A549 (cell line): ENCODE measurements at regions of chr14 and their contacts with region 1.

Region 1: DNA sequence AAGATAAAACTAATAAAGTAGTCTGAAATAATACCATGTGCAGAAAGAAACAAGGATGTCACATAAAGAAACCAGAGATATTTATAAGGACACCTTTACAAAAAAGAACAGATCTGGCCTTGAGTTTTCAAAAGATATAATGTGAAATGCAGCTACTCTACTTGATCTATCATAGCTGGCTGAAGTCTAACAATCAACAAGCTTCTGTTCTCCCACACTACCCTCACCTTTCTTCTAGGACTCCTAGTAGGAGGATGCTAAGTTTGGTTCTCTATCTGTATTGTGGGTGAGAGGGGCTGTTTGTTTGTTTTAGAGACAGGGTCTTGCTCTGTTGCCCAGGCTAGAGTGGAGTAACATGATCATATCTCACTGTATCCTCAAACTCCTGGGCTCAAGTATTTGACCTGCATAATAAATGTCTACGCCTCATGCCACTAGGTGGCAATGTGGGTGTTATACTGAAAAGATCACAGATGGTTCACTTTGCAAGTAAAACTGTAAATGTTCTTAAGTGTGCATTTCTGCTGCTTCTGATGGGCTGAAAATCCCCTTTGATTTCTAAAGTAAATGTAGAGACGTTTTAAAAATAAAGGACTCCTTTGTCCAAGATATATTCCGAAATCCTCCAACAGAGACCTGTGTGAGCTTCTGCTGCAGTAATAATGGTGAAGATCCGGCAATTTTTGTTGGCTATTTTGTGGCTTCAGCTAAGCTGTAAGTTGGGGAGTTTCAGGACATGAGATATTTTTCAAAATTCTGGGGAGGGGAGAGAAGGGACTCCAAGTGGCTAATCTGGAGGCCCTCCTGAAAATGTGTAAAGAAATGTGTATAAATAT is 269.3 kb downstream of the DAD1 start:
- DNase-seq: peak; percentile 29 to 73
- ATAC-seq: peak; percentile 92 to 97
- H3K4me3 ChIP-seq: no peak overlapping the region
- H3K27ac ChIP-seq: no peak overlapping the region
- H3K4me1 ChIP-seq: no peaks in the 10 kb centered on the region; the same call in 2 of the 3 replicates
- CTCF ChIP-seq: peak; percentile 79
- EP300 ChIP-seq: no peak
- POLR2A ChIP-seq: no peak
- RAD21 ChIP-seq: peak; percentile 74 to 79

Region 2: DNA sequence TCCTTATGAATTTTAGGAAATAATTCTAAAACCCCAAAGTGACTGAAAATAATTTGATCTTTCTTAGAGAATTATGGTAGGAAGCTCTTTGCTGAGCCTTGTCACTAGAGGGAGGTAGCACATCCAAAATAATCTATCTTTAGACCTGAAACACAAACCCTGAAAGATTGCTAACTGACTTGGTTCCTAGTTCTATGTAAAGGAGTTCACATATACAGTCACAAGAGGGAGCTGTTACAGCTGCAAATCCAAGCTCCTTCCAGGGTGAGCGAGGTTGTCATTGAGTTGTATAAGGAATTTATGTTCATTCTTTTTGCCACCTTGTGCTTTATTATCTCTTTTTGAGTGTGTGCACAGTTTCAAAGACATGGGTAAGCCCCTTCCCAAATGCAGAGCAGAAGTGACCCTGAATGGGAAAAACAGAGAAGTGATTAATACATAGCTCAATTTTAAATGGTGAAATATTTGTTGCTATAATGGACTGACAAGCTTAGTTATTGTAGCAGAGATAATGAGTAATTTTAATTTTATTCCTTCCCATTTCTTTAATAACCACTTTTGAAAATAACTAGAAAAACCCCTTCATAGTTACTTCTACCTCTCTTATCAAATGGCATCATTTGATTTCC is 118.7 kb before region 1 on chr14:
- CTCF ChIA-PET with region 1: interaction called, 11 read pairs
- POLR2A ChIA-PET with region 1: no interaction called
- DNase-seq: peak; percentile 16 to 71
- ATAC-seq: peak; percentile 76 to 95
- H3K4me3 ChIP-seq: no peak overlapping the region
- H3K27ac ChIP-seq: no peak overlapping the region
- H3K4me1 ChIP-seq: no peaks in the 10 kb centered on the region
- CTCF ChIP-seq: peak; percentile 59
- EP300 ChIP-seq: no peak
- POLR2A ChIP-seq: no peak
- RAD21 ChIP-seq: peak; percentile 18 to 50; a peak in 2 of 5 replicates

Region 3: GRCh38 chr14:22303589-22304195 is 16.1 kb before region 1 on chr14:
- CTCF ChIA-PET with region 1: interaction called, 25 read pairs
- POLR2A ChIA-PET with region 1: no interaction called
- DNase-seq: no peak
- ATAC-seq: 0 out of 6 replicates have a peak, but pooled peaks of 1 of the 2 experiments have one; percentile 47
- H3K4me3 ChIP-seq: no peak overlapping the region
- H3K27ac ChIP-seq: no peak overlapping the region
- H3K4me1 ChIP-seq: no peaks in the 10 kb centered on the region
- CTCF ChIP-seq: peak; percentile 60
- EP300 ChIP-seq: no peak
- POLR2A ChIP-seq: no peak
- RAD21 ChIP-seq: peak; percentile 45; a peak in 3 of 5 replicates

Region 4: DNA sequence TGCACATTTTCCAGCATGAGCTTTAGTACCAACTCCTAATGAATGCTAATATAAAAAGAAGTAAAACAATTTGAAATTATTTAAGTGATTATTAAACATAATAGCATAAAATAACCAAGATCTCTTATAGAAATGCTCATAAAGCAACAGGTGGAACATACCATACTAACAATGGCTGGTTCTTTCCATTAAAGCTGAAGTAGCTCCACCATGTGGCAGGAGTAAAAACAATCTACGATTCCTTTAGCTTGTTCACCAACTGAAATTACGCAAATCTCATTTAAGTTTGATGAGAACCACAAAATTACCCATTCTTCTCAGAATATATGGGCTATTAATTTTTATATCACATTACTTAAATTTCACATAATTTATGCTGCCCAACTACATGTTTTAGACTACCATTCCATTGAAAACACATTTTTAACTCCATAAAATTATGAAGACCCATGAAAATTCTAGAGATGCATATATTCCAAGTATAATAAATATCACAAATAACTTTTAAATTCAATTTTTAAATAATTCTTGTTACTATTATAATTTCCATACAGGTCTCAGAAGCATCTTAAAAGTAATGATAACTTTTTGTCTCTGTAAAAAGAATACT is 55.7 kb after region 1 on chr14:
- CTCF ChIA-PET with region 1: interaction called, 138 read pairs
- POLR2A ChIA-PET with region 1: no interaction called
- DNase-seq: peak; percentile 21 to 70
- ATAC-seq: peak in 1 of 2 experiments; percentile 74; a peak in 3 of 6 replicates
- H3K4me3 ChIP-seq: no peak overlapping the region
- H3K27ac ChIP-seq: no peak overlapping the region
- H3K4me1 ChIP-seq: peaks cover under 1% of the 10 kb centered on the region; the same call in 2 of the 3 replicates
- CTCF ChIP-seq: peak; percentile 90
- EP300 ChIP-seq: no peak
- POLR2A ChIP-seq: no peak
- RAD21 ChIP-seq: peak; percentile 80 to 85

Region 5: GRCh38 chr14:22386924-22387775 is 67.4 kb after region 1 on chr14:
- CTCF ChIA-PET with region 1: interaction called, 25 read pairs
- POLR2A ChIA-PET with region 1: no interaction called
- DNase-seq: peak; percentile 72 to 82
- ATAC-seq: peak; percentile 55 to 78; a peak in 4 of 6 replicates
- H3K4me3 ChIP-seq: no peak overlapping the region
- H3K27ac ChIP-seq: no peak overlapping the region
- H3K4me1 ChIP-seq: peaks cover 32% of the 10 kb centered on the region
- CTCF ChIP-seq: peak; percentile 90
- EP300 ChIP-seq: no peak
- POLR2A ChIP-seq: no peak
- RAD21 ChIP-seq: peak; percentile 92 to 93